AG04449 (cell line): ENCODE measurements at regions of chr19 and their contacts with region 1.

Region 1: DNA sequence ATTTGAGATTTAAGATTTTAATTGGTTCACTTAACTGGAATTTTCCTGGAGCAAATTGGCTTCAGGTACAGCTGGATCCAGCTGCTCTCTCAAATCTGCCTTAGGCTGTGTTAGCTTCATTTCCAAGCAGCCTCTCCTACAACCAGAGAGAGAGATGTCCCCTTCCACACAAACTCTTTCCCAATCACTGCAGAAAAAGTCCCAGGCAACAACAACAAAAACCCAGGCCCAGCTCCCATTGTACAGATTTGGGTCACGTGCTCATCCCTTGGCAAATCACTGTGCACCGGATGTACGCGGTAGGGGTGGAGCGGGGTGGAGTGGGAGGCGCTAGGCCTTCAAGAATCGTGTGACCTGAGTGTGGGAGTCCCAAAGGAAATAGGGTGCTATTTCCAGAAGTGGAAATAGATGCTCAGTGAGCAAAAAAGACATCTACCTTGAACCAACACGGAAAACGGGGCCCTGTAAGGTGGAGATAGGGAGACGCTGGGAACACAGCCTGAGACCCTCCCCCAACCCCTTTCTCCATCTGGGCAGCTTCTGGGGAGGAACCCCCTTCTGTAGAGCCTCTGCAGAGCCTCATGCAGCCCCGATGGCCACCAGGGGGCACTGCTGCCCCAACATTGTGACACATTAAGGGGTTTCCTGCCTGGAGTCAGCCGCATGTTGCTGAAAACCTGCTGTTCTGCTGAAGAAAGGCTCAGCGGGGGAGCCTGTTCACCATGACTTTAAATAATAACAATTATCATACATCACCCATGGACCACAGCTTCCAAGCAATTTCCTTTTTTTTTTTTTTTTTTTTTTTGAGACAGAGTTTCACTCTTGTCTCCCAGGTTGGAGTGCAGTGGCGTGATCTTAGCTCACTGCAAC is 25.4 kb downstream of the HPN start:
- DNase-seq: no peak
- H3K4me3 ChIP-seq: no peak overlapping the region
- CTCF ChIP-seq: peak; percentile 93

Region 2: DNA sequence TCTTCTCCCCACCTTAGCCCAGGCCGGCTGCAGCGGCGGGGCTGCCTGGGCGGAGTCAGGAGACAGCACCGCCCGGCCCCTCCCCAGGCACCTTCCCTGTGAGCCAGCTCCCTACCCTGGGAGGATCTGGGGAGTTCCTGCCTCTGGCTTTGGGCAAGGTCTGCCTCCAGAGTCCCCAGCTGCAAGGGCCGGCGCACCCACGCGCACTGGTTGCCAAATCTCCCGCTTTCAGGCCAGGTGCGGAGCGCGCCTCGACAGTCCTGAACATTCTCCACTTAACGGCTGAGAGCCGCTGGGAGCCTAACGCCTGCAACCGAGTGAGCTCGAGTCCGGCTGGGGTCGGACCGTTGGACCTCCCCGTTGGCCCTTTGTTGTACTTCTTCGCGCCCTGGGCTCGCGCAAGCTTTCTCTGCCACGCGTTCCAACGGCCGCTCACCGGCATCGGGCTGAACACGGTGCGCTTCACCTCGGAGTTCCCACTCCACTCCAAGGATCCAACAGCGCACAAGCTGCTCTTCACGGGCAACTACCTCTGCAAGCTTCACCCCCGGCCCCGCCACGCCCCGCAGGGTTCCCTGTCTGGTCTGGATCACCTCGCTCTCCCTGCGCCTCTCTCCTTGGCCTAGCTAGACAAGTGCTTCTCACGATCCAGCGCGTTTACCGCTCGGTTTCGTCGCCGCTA is 161.9 kb before region 1 on chr19:
- CTCF ChIA-PET with region 1: no interaction called
- POLR2A ChIA-PET with region 1: no interaction called
- DNase-seq: no peak
- H3K4me3 ChIP-seq: no peak overlapping the region
- CTCF ChIP-seq: no peak

Region 3: GRCh38 chr19:35055715-35056179 is 11.2 kb before region 1 on chr19:
- CTCF ChIA-PET with region 1: interaction called, 44 read pairs
- POLR2A ChIA-PET with region 1: no interaction called
- DNase-seq: no peak
- H3K4me3 ChIP-seq: no peak overlapping the region
- CTCF ChIP-seq: no peak

Region 4: DNA sequence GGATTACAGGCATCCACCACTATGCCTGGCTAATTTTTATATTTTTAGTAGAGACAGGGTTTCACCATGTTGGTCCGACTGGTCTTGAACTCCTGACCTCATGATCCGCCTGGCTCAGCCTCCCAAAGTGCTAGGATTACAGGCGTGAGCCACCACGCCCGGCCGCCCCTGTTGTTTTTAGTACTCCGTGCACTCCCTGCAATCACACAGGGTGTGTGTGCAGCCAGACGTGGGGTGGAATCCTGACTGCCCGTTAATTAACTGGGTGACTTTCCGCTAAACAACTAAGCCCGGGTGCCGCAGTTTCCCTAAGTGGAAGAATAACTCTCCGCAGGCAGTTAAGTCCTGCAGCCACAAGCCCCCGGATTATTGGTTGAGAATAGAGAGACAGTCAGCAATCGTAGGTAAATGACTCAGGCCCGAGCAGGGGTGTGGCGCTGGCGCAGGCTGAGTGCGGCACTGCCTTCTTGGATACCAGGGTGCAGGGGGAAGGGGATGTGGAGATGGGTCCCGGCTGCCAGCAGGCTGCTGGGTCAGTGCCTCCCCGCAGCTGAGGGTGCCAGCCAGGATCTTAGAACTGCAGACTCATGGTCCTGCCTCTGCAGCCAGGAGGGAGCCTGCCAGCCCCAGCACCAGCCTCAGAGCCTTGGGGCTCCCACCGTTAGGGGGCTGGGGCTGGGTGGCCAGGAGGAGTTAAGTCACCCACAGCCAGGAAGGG is 42.6 kb after region 1 on chr19:
- CTCF ChIA-PET with region 1: interaction called, 23 read pairs
- POLR2A ChIA-PET with region 1: no interaction called
- DNase-seq: no peak
- H3K4me3 ChIP-seq: no peak overlapping the region
- CTCF ChIP-seq: no peak

Region 5: DNA sequence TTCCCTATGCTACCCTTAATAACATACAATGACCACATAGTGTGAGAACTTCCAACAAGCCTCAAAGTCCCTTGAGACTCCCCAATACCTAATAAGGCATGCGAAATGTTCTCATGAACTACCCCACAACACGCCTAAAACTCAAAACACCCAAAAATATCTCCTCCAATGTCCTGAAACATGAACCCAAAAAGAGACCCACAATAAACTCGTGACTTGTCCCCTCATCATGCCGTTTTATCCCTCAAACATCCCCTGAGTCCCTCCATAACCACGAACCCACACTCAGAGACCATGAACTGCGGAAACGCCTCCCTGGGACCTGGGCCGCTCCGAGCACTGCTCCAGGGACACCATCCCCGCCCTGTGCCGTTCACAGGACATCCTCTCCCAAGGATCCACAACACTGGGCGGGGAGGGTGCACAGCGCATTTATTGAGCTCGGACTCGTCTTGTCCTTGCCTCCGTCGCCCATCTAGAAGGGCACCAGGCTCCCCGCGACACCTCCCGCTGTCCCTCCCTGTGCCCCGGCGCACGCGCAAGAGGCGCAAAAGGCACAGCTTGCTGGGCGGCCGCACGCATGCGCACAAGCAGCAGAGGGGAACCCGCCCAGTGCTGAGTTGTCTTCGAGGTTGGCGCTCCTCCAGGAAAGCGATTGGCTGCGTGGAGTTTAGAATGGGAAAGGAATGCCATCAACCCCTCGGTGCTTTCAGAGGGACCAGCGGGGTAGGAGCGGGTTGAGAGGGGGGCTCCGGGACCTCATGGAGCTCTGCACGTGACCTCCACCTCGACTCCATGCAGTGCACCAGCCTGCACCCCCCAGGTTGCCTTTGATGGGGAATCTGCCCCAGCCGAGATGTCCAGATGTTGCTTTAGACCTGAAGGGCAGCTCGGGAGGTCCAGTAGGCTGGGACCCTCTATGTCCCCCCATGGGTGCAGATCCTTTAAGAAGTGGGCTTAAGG is 57.5 kb after region 1 on chr19:
- CTCF ChIA-PET with region 1: interaction called, 21 read pairs
- POLR2A ChIA-PET with region 1: no interaction called
- DNase-seq: peak; percentile 33
- H3K4me3 ChIP-seq: peak overlapping the region; percentile 91
- CTCF ChIP-seq: no peak

Region 6: GRCh38 chr19:35140962-35141637 is 74.2 kb after region 1 on chr19:
- CTCF ChIA-PET with region 1: interaction called, 245 read pairs
- POLR2A ChIA-PET with region 1: interaction called, 3 read pairs
- DNase-seq: peak; percentile 14
- H3K4me3 ChIP-seq: peak overlapping the region; percentile 12; the same call in 1 of the 2 replicates
- CTCF ChIP-seq: peak; percentile 73